Heart left ventricle (tissue), 16 donors: ENCODE measurements at regions of chr17 and their contacts with region 1.

Region 1: DNA sequence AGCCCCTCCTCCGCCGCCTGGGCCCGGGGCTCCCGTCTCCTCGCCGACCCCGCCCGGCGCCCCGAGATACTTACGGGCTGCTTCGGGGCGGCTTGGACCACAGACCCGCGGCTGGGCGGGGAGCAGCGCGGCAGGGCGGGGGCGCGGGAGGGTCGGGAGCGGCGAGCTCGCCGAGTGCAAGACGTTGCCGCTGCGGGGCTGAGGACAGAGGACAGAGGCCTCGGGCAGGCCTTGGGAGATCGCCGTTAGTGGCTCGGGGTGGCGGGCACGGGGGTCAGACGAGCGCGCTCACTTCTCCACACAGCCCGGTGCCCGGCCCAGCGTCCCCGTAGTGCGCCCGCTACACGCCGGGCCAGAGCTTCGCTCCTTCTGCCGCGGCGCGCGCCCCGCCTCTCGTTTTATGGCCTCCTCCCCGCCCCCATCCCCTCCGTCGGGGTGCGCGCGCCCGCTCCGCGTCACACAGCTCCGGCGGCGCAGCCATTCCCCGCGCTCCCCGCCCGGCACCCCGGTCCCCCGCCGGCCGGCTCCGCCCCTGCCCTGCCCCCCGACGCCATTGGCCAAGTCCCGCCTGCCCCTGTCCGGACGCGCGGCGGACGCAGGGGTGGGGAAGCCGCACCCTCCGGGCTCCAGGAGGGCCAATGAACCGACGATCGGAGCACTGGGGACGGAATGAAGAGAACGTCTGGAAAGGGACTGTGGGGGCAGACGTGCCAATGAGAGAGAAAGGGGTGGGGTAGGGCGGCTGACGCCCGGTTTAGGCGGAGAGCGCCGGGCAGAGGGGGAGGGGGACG is at the start of gene TOB1:
- DNase-seq: peak; percentile 99
- ATAC-seq: peak; percentile 88 to 93 (median 91)
- H3K4me3 ChIP-seq: peak within 1 kb of the TSS; percentile 75 to 97 (median 90)
- H3K27ac ChIP-seq: peak within 1 kb of the TSS; percentile 99 to 100 (median 100)
- H3K4me1 ChIP-seq: peaks cover 2 to 54% (median 32%) of the 10 kb centered on the region in 12 donors
- H3K27me3 ChIP-seq: no peaks in the 10 kb centered on the region
- CTCF ChIP-seq: no peak
- POLR2A ChIP-seq: peak; percentile 98 to 100
- total RNA-seq, gene TOB1: 38.3 to 136 (median 88.7) TPM

Region 2: GRCh38 chr17:50816771-50817751 is 49.1 kb before region 1 on chr17:
- intact Hi-C with region 1: no loop called
- DNase-seq: peak in 3 of 5 donors; percentile 39 to 49 (median 49)
- ATAC-seq: peak; percentile 42 to 79 (median 68)
- H3K4me3 ChIP-seq: peak overlapping the region in 1 of 12 donors; percentile 14
- H3K27ac ChIP-seq: no peak overlapping the region
- H3K4me1 ChIP-seq: peaks cover 0 to 8% (median 0%) of the 10 kb centered on the region in 12 donors
- H3K27me3 ChIP-seq: peaks cover 0 to 8% (median 0%) of the 10 kb centered on the region in 9 donors
- CTCF ChIP-seq: peak; percentile 69 to 87 (median 80)
- POLR2A ChIP-seq: no peak

Region 3: DNA sequence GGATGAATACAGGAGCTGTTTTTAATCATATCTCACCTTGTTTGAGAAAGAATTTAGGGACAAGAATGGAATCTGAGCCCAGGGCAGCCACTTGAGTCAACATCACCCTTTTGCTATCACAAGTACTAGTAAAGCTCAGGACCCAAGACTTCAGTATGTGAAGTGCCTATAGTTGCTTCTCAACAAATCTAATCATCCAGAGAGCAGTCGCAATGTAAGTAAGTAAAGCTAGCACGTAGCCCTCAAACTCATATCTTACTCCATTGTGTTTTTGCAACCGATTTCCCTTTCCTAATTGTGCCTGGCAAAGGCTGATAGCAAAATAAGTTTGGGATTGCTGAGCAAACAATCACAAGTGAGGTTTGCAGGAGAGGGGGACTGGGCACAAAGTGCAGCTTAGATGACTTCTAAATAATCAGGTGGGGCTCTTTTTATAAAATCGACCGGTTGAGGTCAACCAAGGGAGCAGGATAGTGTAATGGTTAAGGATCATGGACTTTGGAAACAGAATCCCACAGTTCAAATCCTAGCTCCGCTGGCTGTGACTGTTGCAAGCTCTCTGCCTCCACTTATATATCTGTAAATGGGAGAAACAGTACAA is 13.1 kb before region 1 on chr17:
- intact Hi-C with region 1: loop called in 1 of 10 experiments (anchors 2 kb)
- DNase-seq: no peak
- ATAC-seq: peak in 1 of 4 donors; percentile 18
- H3K4me3 ChIP-seq: peak overlapping the region in 1 of 12 donors; percentile 0
- H3K27ac ChIP-seq: peak overlapping the region in 11 of 12 donors; percentile 25 to 93 (median 83)
- H3K4me1 ChIP-seq: peaks cover 0 to 38% (median 15%) of the 10 kb centered on the region in 12 donors
- H3K27me3 ChIP-seq: no peaks in the 10 kb centered on the region
- CTCF ChIP-seq: no peak
- POLR2A ChIP-seq: no peak

Region 4: DNA sequence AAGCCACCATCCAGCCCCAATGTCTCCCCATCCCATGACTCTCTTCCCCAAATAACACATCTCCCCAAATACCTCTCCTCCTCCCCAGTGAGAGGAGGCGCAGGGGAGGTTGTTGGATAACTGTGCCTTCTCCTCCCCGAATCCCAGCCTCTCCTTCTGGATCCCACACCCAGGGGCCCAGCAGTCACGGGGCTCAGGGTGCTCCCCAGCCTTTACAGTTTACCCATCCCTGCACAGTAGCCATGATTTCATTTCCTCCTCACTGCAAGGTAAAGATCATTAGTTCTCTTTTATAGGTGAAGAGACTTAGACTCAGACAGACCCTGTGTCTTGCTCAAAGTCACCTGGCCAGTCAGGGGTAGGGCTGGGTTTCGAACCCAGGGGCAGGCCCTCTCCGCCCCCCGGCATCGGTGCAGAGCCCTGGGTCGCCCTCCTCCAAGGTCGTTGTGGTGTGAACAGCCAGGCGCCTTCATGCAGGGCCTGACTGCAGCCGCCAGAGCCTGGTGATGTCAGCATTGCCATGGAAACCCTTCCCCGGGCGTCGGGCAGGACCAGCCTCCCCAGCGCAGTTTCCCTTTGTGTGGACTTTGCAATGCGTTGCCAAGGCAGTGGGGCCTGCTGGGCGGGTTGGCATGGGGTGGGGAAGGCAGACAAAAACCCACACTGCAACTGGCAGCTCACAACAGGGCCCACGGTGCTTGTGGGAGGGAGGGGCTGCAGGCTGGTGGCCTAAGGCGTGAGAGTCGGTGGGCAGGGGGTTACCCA is 53.3 kb after region 1 on chr17:
- intact Hi-C with region 1: loop called in 7 of 10 experiments (anchors 5 kb)
- DNase-seq: peak; percentile 91 to 96 (median 92)
- ATAC-seq: peak; percentile 88 to 93 (median 92)
- H3K4me3 ChIP-seq: no peak overlapping the region
- H3K27ac ChIP-seq: peak overlapping the region; percentile 69 to 89 (median 82)
- H3K4me1 ChIP-seq: peaks cover 13 to 66% (median 49%) of the 10 kb centered on the region in 12 donors
- H3K27me3 ChIP-seq: no peaks in the 10 kb centered on the region
- CTCF ChIP-seq: no peak
- POLR2A ChIP-seq: no peak

Region 5: GRCh38 chr17:50944054-50944901 is 78.1 kb after region 1 on chr17:
- intact Hi-C with region 1: loop called in 5 of 10 experiments (anchors 1 to 5 kb)
- DNase-seq: peak; percentile 90 to 92 (median 90)
- ATAC-seq: peak; percentile 38 to 88 (median 81)
- H3K4me3 ChIP-seq: peak overlapping the region; percentile 18 to 72 (median 65)
- H3K27ac ChIP-seq: peak overlapping the region; percentile 86 to 100 (median 96)
- H3K4me1 ChIP-seq: peaks cover 4 to 49% (median 31%) of the 10 kb centered on the region in 12 donors
- H3K27me3 ChIP-seq: no peaks in the 10 kb centered on the region
- CTCF ChIP-seq: peak in 1 of 12 donors; percentile 25
- POLR2A ChIP-seq: peak in 1 of 2 donors; percentile 69

Region 6: GRCh38 chr17:51120739-51121617 is 254.8 kb after region 1 on chr17 and contains the start of gene SPAG9:
- intact Hi-C with region 1: loop called in 2 of 10 experiments (anchors 5 to 10 kb)
- DNase-seq: peak; percentile 97 to 98 (median 98)
- ATAC-seq: peak; percentile 89 to 96 (median 92)
- H3K4me3 ChIP-seq: peak within 1 kb of the TSS; percentile 66 to 100 (median 96)
- H3K27ac ChIP-seq: peak within 1 kb of the TSS; percentile 95 to 100 (median 99)
- H3K4me1 ChIP-seq: peaks cover 8 to 49% (median 29%) of the 10 kb centered on the region in 12 donors
- H3K27me3 ChIP-seq: no peaks in the 10 kb centered on the region
- CTCF ChIP-seq: no peak
- POLR2A ChIP-seq: peak; percentile 57 to 82
- total RNA-seq, gene SPAG9: 35.8 to 65.4 (median 57.4) TPM